ENCODE measurements at regions of chr5 and their contacts with region 1.

Region 1: DNA sequence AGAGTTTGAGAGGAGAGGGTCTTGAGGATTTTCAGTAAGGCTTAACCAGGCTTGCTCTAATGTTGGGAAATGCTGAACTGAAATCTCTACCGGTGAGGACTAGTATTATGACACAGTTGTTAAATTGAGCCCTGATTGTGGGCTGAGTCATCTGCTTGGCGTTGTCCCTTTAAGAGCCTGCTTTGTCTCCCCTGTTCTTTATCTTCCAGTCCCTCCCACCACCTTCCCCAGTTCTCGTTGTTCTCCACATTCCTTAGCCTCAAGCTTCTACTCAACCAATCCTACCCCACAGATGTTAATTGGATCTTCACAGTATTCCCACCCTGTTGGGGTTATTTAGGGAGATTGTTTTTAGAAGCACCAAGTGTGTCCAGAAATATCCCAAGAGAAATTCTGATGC is 57.6 kb downstream of the ANKRD55 start:
- DNase-seq: no peak
- ATAC-seq: peak; percentile 80

Region 2: GRCh38 chr5:56075361-56075760 is 100.1 kb before region 1 on chr5:
- intact Hi-C with region 1: loop called (anchors 5 kb)
- DNase-seq: peak; percentile 61
- ATAC-seq: peak; percentile 63